Kidney (tissue), 22 donors: ENCODE measurements at regions of chr6 and their contacts with region 1.

Region 1: DNA sequence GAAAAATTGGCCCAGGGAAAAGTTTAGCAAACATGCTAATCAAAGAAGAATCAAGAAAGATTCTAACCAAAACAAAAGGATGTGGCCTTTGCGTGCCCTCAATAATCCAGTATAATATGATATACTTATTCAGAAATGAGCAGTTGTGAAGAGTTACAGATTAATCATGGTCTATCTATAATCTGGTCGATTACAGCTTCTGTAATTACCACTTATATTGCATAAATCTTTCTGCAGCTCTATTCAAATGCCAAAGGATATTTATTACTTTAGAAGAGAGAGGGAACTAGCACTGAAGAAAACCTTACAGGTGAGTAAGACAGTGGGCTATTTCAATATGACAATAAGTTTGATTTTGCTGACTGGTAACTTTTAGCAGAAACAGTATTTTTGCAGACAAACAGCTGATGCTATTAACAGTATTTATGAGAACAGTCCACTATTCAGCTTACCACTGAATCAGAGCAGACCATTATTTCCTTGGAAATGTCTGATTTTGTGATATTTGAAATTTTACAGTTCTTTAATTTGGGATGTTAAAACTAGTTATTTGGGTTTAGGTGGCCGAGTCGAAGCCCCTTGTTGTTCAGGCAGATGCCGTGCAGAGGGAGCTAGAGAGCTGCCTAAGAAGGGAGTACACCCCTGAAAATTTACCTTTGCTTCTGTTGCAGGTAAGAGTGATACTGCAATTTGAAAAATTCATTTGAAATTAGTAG is 92.2 kb downstream of the CEP57L1 start:
- DNase-seq: peak in 4 of 5 donors; percentile 48 to 66 (median 60)
- H3K4me3 ChIP-seq: peak overlapping the region; percentile 8 to 32 (median 31)
- H3K27ac ChIP-seq: no peak overlapping the region
- H3K4me1 ChIP-seq: peaks cover 0 to 6% (median 2%) of the 10 kb centered on the region in 3 donors
- H3K27me3 ChIP-seq: no peaks in the 10 kb centered on the region
- CTCF ChIP-seq: peak; percentile 95

Region 2: DNA sequence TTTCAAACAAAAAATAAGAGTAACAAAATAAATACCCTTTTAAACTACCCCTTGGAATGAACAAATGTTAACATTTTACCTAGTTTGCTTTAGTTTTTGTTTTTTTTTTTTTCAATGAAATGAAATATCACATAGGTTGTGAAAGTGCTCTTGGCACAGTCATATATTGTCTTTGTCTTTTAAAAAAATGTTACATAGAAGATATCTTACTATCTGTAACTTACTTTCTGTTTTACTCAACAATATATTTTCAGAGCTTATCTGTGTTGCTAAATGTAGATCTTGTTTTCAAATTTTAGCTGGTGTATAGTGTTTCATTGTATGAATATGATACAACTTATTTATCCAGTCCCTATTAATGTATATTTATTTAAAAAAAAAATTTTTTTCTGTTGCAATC is 83.6 kb before region 1 on chr6:
- intact Hi-C with region 1: no loop called
- DNase-seq: no peak
- H3K4me3 ChIP-seq: no peak overlapping the region
- H3K27ac ChIP-seq: no peak overlapping the region
- H3K4me1 ChIP-seq: no peaks in the 10 kb centered on the region
- H3K27me3 ChIP-seq: no peaks in the 10 kb centered on the region
- CTCF ChIP-seq: no peak

Region 3: GRCh38 chr6:109382576-109383437 is 195.2 kb after region 1 on chr6:
- intact Hi-C with region 1: loop called (anchors 10 kb)
- DNase-seq: peak; percentile 95 to 98 (median 97)
- H3K4me3 ChIP-seq: peak overlapping the region; percentile 90 to 96 (median 95)
- H3K27ac ChIP-seq: peak overlapping the region; percentile 95 to 100
- H3K4me1 ChIP-seq: peaks cover 0 to 11% (median 9%) of the 10 kb centered on the region in 3 donors
- H3K27me3 ChIP-seq: no peaks in the 10 kb centered on the region
- CTCF ChIP-seq: peak; percentile 39